ENCODE measurements at regions of chr17 and their contacts with region 1.

Region 1: DNA sequence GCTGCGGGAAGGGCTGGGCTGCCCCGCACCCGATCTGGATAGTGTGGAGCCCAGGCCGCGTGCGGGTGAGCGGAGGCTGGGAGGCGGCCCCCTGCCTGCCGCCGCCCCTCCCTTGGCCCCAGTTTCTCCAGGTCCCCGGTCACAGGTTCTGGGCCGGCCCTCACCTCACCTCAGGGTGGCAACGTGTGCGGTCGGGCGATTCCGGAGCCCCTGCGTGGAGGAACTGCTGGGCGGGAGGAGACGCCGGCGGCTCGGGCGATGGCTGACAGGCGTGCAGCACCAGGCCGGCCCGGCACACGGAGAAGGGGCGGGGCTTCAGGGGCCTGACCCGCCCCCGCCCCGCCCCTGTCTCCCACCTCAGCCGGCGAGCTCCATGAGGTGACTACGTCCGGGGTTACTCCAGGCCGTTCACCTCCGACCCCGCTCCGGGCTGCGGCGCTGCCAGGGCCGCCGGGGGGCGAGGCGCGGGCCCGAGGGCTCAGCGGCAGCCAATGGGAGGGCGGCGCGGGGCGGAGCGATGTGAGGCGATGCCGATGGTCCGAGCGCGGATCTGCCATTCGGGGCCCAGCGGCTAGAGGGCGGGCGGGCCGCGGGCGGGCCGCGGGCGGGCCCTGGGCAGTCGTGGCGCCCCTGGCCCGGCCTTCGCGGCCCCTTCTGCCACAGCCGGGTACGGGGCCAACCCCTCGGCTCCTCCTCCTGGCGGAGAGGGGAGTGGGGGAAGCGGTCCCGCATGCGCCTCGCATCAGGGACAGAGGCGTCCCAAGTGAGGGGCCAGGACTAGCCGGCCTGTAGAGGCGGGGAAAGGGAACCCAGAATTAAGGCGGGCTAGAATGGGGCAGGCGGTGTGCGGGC is 16.7 kb upstream of the C17orf78 start:
- DNase-seq: peak; percentile 94 to 95
- ATAC-seq: peak; percentile 92 to 98 (median 92)
- H3K4me3 ChIP-seq: peak overlapping the region; percentile 72
- H3K4me3 Mint-ChIP-seq: peak overlapping the region; percentile 83
- H3K27ac ChIP-seq: peak overlapping the region; percentile 77
- H3K27ac Mint-ChIP-seq: peak overlapping the region; percentile 81 to 85
- H3K4me1 ChIP-seq: peaks cover 16% of the 10 kb centered on the region
- H3K4me1 Mint-ChIP-seq: peaks cover 19% of the 10 kb centered on the region in 2 donors
- H3K27me3 ChIP-seq: no peaks in the 10 kb centered on the region
- H3K27me3 Mint-ChIP-seq: no peaks in the 10 kb centered on the region
- CTCF ChIP-seq: peak; percentile 39

Region 2: DNA sequence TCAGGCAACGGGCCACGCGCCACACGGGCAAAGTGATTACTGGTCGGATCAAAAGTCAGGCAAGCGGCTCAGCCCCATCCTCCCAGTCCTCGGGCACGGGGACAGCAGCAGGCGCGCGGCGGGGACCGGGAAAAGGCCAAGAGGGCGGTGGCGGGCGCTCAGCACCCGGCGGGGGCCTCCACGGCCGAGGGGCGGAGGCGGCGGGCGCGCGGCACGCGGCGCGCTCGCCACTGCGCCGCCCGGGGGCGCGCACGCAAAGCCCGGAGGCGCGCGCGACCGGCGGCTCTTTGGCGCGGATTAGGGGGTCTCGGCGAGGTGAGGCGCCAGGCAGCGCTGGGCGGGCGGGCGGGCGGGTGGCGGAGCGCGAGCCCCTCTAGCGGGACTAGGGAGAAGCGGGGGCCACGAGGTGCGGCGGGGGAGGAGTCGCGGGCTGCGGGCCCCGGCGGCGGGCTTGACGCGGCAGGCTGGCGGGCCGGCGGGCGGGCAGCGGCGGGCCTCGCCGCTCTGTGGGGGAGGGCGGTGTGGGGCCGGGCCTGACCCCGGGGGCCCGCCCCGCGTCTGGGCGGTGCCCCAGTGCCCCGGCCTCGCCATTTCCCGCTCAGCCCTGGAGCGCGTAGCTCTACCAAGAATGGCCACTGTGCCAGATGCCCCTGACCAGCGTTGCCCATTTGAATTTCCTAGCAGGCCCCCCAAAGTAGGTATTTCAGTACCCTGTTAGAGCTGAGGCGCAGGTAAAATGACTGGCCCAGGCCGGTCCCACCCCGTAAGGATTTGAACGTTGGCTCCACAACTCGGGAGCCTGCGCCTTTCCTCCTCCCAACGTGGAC is 47.8 kb after region 1 on chr17 and contains the starts of genes ACACA and TADA2A:
- intact Hi-C with region 1: loop called (anchors 1 kb)
- DNase-seq: peak; percentile 78 to 85
- ATAC-seq: peak; percentile 94 to 99 (median 96)
- H3K4me3 ChIP-seq: peak within 1 kb of the TSS; percentile 81
- H3K4me3 Mint-ChIP-seq: peak within 1 kb of the TSS; percentile 95
- H3K27ac ChIP-seq: peak within 1 kb of the TSS; percentile 71
- H3K27ac Mint-ChIP-seq: peak within 1 kb of the TSS; percentile 87 to 91
- H3K4me1 ChIP-seq: peaks cover 19% of the 10 kb centered on the region
- H3K4me1 Mint-ChIP-seq: peaks cover 9 to 17% of the 10 kb centered on the region in 2 donors
- H3K27me3 ChIP-seq: no peaks in the 10 kb centered on the region
- H3K27me3 Mint-ChIP-seq: no peaks in the 10 kb centered on the region
- CTCF ChIP-seq: no peak
- total RNA-seq, gene ACACA: 22.9 to 23.9 (median 23.6) TPM
- total RNA-seq, gene TADA2A: 14.8 to 28.1 (median 26.7) TPM

Measured in natural killer cell (primary cell).